Dorsolateral prefrontal cortex (tissue), 120 donors: ENCODE measurements at regions of chr1 and their contacts with region 1.

Region 1: GRCh38 chr1:2412519-2413233 is at the start of gene PEX10:
- DNase-seq: peak; percentile 89 to 99 (median 94)
- H3K4me3 ChIP-seq: peak within 1 kb of the TSS; percentile 62 to 98 (median 86)
- H3K27ac ChIP-seq: peak within 1 kb of the TSS in 57 of 59 donors; percentile 20 to 95 (median 84)
- H3K27me3 ChIP-seq: peaks cover 0 to 14% (median 0%) of the 10 kb centered on the region in 45 donors
- CTCF ChIP-seq: peak in 20 of 56 donors; percentile 3 to 56 (median 24)
- total RNA-seq, gene PEX10: 15.4 to 34.4 (median 24.5) TPM

Region 2: GRCh38 chr1:2345223-2346080 is 67.2 kb before region 1 on chr1:
- intact Hi-C with region 1: no loop called
- DNase-seq: peak in 2 of 10 donors; percentile 32 to 42
- H3K4me3 ChIP-seq: no peak overlapping the region
- H3K27ac ChIP-seq: no peak overlapping the region
- H3K27me3 ChIP-seq: no peaks in the 10 kb centered on the region
- CTCF ChIP-seq: no peak

Region 3: GRCh38 chr1:2391041-2391930 is 21.4 kb before region 1 on chr1 and contains the starts of genes MORN1 and RER1:
- intact Hi-C with region 1: loop called (anchors 1 to 2 kb)
- DNase-seq: peak; percentile 97 to 99 (median 99)
- H3K4me3 ChIP-seq: peak within 1 kb of the TSS; percentile 62 to 100 (median 91)
- H3K27ac ChIP-seq: peak within 1 kb of the TSS in 58 of 59 donors; percentile 38 to 93 (median 83)
- H3K27me3 ChIP-seq: no peaks in the 10 kb centered on the region
- CTCF ChIP-seq: peak in 42 of 56 donors; percentile 7 to 71 (median 40)
- total RNA-seq, gene MORN1: 14.0 to 39.6 (median 25.8) TPM
- total RNA-seq, gene RER1: 62.7 to 113 (median 81.7) TPM

Region 4: DNA sequence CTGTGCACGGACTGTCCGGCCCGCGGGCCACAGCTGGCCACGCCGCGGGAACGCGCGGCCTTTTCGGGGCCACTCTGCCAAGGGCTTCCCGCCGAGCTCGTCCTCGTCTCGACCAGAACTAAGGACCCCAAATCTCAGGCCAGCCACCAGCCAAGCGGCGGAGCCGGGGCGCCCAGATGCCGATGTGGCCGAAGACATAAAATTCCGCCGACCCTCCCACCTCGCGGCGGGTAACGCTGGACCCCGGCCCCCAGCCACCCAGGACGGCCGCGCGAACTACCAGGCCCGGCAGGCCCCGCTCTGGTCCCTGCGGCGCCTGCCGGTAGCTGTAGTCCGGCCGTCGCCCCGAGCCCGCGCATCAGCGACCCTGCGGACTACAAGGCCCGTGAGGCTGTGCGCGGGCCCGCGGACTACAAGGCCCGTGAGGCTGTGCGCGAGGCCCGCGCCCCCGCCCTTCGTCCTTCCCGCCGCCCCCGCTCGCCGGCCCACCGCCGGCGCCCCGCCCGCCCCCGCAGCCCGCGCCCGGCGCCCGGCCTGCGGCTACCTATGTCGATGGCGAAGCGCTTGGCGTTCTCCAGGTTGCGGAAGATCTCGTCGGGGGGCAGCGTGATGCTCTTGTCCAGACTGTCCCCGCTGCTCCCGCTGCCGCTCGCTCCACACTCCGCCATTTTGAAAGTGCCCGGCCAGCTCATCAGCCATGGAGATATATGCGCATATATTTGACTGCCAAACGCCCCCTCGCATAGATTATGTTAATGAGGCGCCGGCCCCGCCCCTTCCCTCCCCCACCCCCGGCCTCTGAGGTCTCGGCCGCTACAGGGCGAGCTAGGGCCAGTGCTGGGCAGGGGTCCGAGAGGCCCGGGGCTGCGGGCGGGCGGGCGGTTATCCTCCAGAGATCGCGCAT is 113.5 kb after region 1 on chr1 and contains the start of gene PANK4:
- intact Hi-C with region 1: loop called (anchors 1 to 5 kb)
- DNase-seq: peak; percentile 87 to 96 (median 93)
- H3K4me3 ChIP-seq: peak within 1 kb of the TSS; percentile 64 to 100 (median 91)
- H3K27ac ChIP-seq: peak within 1 kb of the TSS in 58 of 59 donors; percentile 10 to 94 (median 86)
- H3K27me3 ChIP-seq: peaks cover 0 to 20% (median 6%) of the 10 kb centered on the region in 45 donors
- CTCF ChIP-seq: peak in 36 of 56 donors; percentile 9 to 57 (median 34)
- total RNA-seq, gene PANK4: 31.4 to 65.2 (median 46.7) TPM

Region 5: GRCh38 chr1:2586154-2587070 is 173.7 kb after region 1 on chr1 and contains the start of gene PRXL2B:
- intact Hi-C with region 1: loop called (anchors 2 to 5 kb)
- DNase-seq: peak; percentile 97 to 99 (median 99)
- H3K4me3 ChIP-seq: peak within 1 kb of the TSS; percentile 67 to 95 (median 85)
- H3K27ac ChIP-seq: peak within 1 kb of the TSS; percentile 55 to 99 (median 94)
- H3K27me3 ChIP-seq: no peaks in the 10 kb centered on the region
- CTCF ChIP-seq: peak in 8 of 56 donors; percentile 5 to 26 (median 12)
- total RNA-seq, gene PRXL2B: 24.0 to 76.4 (median 50.5) TPM

Region 6: GRCh38 chr1:2786329-2787162 is 373.9 kb after region 1 on chr1:
- intact Hi-C with region 1: loop called (anchors 1 to 5 kb)
- DNase-seq: peak in 7 of 10 donors; percentile 26 to 62 (median 53)
- H3K4me3 ChIP-seq: no peak overlapping the region
- H3K27ac ChIP-seq: no peak overlapping the region
- H3K27me3 ChIP-seq: peaks cover 0 to 63% (median 43%) of the 10 kb centered on the region in 45 donors
- CTCF ChIP-seq: peak; percentile 27 to 87 (median 72)

Region 7: DNA sequence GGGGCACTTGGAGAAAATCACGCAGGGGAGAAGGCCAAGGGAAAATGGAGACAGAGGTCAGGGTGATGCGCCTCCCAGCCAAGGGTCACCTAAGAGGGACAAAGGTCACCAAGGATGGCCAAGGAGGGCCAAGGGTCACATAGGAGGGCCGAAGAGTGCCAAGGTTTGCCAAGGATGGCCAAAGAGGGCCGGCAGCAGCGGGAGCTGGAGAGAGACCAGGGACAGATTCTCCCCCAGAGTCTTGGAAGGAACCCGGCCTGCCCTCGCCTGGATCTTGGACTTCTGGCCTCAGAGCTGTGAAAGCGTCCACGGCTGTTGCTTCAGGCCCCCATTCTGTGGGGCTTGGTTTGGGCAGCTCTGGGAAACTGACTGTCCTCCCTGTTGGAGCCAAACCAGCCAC is 1016.2 kb after region 1 on chr1:
- intact Hi-C with region 1: loop called (anchors 5 to 10 kb)
- DNase-seq: no peak
- H3K4me3 ChIP-seq: no peak overlapping the region
- H3K27ac ChIP-seq: peak overlapping the region in 2 of 59 donors; percentile 6 to 26
- H3K27me3 ChIP-seq: no peaks in the 10 kb centered on the region
- CTCF ChIP-seq: no peak